Activated CD4-positive, alpha-beta T cell treated with anti-CD3 and anti-CD28 coated beads for 36 hours (primary cell): ENCODE measurements at regions of chr10 and their contacts with region 1.

Region 1: DNA sequence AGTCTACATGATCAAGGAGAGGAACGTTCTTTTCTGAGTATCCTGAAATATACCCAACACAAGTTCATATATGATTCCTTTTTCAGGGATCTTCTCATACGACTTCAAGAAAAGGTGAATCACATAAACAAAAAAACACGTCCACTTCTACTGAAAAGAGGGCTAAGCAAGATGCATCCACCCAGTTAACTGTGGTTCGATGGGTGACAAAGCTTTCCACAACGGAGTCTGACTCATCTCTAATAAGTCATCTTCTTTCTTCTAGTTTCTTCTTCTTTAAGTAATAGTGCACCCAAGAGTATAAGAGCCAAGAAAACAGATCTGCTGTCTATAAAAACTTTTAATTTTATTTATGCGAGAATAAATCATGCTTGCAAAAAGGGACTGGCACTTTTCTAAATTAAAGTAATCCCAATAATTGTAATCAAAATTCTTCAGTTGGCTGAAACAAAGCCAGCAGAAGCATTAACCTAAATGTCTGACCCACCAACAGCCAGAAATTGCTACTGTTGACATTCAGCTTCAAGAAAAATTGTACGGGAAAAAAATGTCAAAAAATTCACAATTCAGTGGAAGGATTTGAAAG is 146.9 kb upstream of the ANK3 start:
- DNase-seq: peak; percentile 54
- ATAC-seq: peak; percentile 94
- H3K4me3 Mint-ChIP-seq: peak overlapping the region; percentile 44
- H3K27ac Mint-ChIP-seq: peak overlapping the region; percentile 55
- H3K4me1 Mint-ChIP-seq: peaks cover 57% of the 10 kb centered on the region
- H3K27me3 Mint-ChIP-seq: no peaks in the 10 kb centered on the region

Region 2: DNA sequence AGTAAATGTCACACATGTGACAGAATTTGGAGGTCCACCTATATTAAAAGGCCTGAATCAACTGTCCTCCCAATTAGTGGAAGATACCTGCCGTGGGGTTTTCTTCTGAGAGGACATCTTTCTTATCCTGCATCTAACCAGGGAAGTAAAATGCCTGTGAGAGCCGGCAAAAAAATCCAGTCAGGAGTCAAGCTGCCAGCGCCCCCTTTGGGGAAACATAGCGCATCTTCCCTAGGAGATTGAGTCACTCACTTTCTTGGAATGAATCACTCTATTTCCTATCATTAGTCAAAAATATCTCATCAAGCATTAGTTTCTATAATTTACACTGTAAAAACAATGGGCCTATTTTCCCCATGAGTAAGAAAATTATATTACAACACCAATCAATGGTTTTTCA is 80.6 kb before region 1 on chr10:
- CTCF ChIA-PET with region 1: no interaction called
- POLR2A ChIA-PET with region 1: no interaction called
- intact Hi-C with region 1: loop called in 1 of 2 experiments (anchors 5 kb)
- DNase-seq: no peak
- ATAC-seq: no peak
- H3K4me3 Mint-ChIP-seq: no peak overlapping the region
- H3K27ac Mint-ChIP-seq: no peak overlapping the region
- H3K4me1 Mint-ChIP-seq: peaks cover 35% of the 10 kb centered on the region
- H3K27me3 Mint-ChIP-seq: no peaks in the 10 kb centered on the region

Region 3: DNA sequence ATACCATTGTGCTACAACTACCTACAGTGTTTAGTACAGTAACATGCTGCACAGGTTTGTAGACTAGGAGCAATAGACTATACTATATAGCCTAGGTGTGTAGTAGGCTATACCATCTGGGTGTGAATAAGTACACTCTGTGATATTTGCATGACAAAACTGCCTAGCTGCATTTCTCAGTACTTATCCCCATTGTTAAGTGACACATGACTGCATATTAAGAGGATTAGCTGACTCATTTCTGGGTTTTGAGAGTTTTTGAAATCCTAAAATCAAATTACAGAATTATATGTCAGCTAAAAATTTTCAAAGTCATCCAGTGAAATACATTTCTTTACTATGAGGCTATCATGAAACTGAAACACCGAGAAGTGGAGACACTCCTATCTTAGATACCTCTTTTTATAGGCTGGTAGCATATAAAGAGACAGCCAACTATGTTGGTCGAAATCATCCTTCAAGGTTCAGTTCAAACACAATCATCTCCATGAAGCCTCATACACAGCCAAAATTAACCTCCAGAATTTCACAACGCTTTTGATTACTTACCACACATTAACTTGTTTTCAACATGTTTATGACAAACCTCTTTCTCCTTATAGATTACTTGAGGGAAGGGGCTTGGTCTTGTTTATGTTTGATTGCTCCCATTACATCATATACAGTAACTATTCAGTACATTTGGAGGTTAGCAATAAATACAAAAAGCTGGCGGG is 57.2 kb before region 1 on chr10:
- CTCF ChIA-PET with region 1: interaction called, 4 read pairs
- POLR2A ChIA-PET with region 1: no interaction called
- intact Hi-C with region 1: loop called in 1 of 2 experiments (anchors 5 kb)
- DNase-seq: no peak
- ATAC-seq: peak; percentile 93
- H3K4me3 Mint-ChIP-seq: no peak overlapping the region
- H3K27ac Mint-ChIP-seq: no peak overlapping the region
- H3K4me1 Mint-ChIP-seq: peaks cover 17% of the 10 kb centered on the region
- H3K27me3 Mint-ChIP-seq: no peaks in the 10 kb centered on the region

Region 4: GRCh38 chr10:60611291-60611747 is 74.7 kb after region 1 on chr10:
- CTCF ChIA-PET with region 1: no interaction called
- POLR2A ChIA-PET with region 1: no interaction called
- intact Hi-C with region 1: loop called (anchors 1 kb)
- DNase-seq: peak; percentile 55
- ATAC-seq: peak; percentile 93
- H3K4me3 Mint-ChIP-seq: peak overlapping the region; percentile 26
- H3K27ac Mint-ChIP-seq: peak overlapping the region; percentile 66
- H3K4me1 Mint-ChIP-seq: peaks cover 35% of the 10 kb centered on the region
- H3K27me3 Mint-ChIP-seq: no peaks in the 10 kb centered on the region

Region 5: DNA sequence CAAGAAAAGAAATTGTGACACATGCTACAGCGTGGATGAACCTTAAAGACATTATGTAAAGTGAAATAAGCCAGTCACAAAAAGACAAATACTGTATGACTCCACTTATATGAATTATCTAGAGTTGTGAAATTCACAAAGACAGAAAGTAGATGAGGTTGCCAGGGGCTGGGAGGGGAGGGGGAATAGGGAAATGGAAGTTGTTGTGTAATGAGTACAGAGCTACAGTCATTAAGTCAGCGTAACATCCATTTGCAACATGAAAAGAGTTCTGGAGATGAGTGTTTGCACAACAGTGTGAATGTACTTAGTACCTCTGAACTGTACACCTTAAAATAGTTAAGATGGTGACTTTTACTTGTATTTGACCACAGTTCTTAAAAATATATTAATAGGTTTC is 129.6 kb after region 1 on chr10:
- CTCF ChIA-PET with region 1: no interaction called
- POLR2A ChIA-PET with region 1: no interaction called
- intact Hi-C with region 1: no loop called
- DNase-seq: peak; percentile 59
- ATAC-seq: peak; percentile 87
- H3K4me3 Mint-ChIP-seq: no peak overlapping the region
- H3K27ac Mint-ChIP-seq: no peak overlapping the region
- H3K4me1 Mint-ChIP-seq: peaks cover 45% of the 10 kb centered on the region
- H3K27me3 Mint-ChIP-seq: no peaks in the 10 kb centered on the region

Region 6: GRCh38 chr10:60717852-60718251 is 181.2 kb after region 1 on chr10:
- CTCF ChIA-PET with region 1: no interaction called
- POLR2A ChIA-PET with region 1: no interaction called
- intact Hi-C with region 1: loop called in 1 of 2 experiments (anchors 5 kb)
- DNase-seq: no peak
- ATAC-seq: peak; percentile 76
- H3K4me3 Mint-ChIP-seq: no peak overlapping the region
- H3K27ac Mint-ChIP-seq: no peak overlapping the region
- H3K4me1 Mint-ChIP-seq: peaks cover 63% of the 10 kb centered on the region
- H3K27me3 Mint-ChIP-seq: no peaks in the 10 kb centered on the region

Region 7: GRCh38 chr10:61363006-61363405 is 826.4 kb after region 1 on chr10:
- CTCF ChIA-PET with region 1: no interaction called
- POLR2A ChIA-PET with region 1: no interaction called
- intact Hi-C with region 1: no loop called
- DNase-seq: no peak
- ATAC-seq: no peak
- H3K4me3 Mint-ChIP-seq: no peak overlapping the region
- H3K27ac Mint-ChIP-seq: no peak overlapping the region
- H3K4me1 Mint-ChIP-seq: no peaks in the 10 kb centered on the region
- H3K27me3 Mint-ChIP-seq: no peaks in the 10 kb centered on the region